GM12878 (cell line): ENCODE measurements at regions of chr11 and their contacts with region 1.

Region 1: GRCh38 chr11:102476812-102477211 is 24.2 kb upstream of the TMEM123 start:
- DNase-seq: no peak
- ATAC-seq: peak; percentile 29
- H3K4me3 ChIP-seq: no peak overlapping the region
- H3K27ac ChIP-seq: no peak overlapping the region
- H3K4me1 ChIP-seq: peaks cover 22% of the 10 kb centered on the region
- H3K27me3 ChIP-seq: no peaks in the 10 kb centered on the region
- CTCF ChIP-seq: no peak
- EP300 ChIP-seq: no peak
- POLR2A ChIP-seq: no peak
- RAD21 ChIP-seq: no peak

Region 2: GRCh38 chr11:102451681-102452460 is 24.9 kb before region 1 on chr11:
- CTCF ChIA-PET with region 1: interaction called, 9 read pairs
- POLR2A ChIA-PET with region 1: interaction called, 6 read pairs
- RAD21 ChIA-PET with region 1: interaction called, 10 read pairs
- SMC1A ChIA-PET with region 1: interaction called, 18 read pairs
- in situ Hi-C with region 1: no loop called
- intact Hi-C with region 1: loop called (anchors 1 kb)
- DNase-seq: no peak
- ATAC-seq: peak; percentile 75
- H3K4me3 ChIP-seq: peak overlapping the region; percentile 75
- H3K27ac ChIP-seq: peak overlapping the region; percentile 79
- H3K4me1 ChIP-seq: peaks cover 17% of the 10 kb centered on the region; the same call in 1 of the 2 replicates
- H3K27me3 ChIP-seq: no peaks in the 10 kb centered on the region
- CTCF ChIP-seq: peak; percentile 27 to 44 (median 35); a peak in 3 of 6 replicates
- EP300 ChIP-seq: no peak
- POLR2A ChIP-seq: peak; percentile 84
- RAD21 ChIP-seq: peak; percentile 20; the same call in 1 of the 2 replicates

Region 3: DNA sequence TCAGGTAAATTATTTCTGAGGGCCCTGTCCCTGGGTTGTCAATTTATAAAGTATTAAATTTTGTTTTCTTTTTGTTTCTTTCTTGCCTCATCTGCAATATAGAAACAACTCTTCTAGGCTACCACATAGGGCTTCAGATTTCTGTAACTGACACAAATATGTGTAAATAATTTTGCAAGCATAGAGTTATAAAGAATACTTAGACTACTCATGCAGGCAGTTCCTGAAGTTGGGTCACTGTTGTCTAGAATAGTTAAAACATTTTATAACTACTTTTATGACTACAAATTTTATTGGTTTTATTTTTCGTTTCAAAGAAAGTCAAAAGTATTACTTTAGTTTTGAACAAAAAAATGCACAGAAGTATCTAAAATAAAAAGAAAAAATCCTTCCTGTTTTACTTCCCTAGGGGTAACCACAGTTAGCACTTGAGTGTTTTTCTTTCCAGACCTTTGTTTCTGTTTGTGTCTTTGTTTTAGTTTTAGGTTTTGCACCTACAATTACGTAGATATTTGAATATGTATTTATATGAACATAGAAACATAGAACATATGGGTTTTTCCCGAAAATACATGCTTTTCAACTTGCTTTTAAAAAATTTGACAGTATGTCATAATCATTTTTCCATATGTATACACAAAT is 11.8 kb before region 1 on chr11:
- CTCF ChIA-PET with region 1: interaction called, 3 read pairs
- POLR2A ChIA-PET with region 1: interaction called, 9 read pairs
- RAD21 ChIA-PET with region 1: interaction called, 4 read pairs
- SMC1A ChIA-PET with region 1: interaction called, 20 read pairs
- in situ Hi-C with region 1: no loop called
- intact Hi-C with region 1: no loop called
- DNase-seq: no peak
- ATAC-seq: peak; percentile 72
- H3K4me3 ChIP-seq: no peak overlapping the region
- H3K27ac ChIP-seq: no peak overlapping the region
- H3K4me1 ChIP-seq: peaks cover 6% of the 10 kb centered on the region; the same call in 1 of the 2 replicates
- H3K27me3 ChIP-seq: no peaks in the 10 kb centered on the region
- CTCF ChIP-seq: no peak
- EP300 ChIP-seq: peak; percentile 25 to 53; a peak in 1 of 4 replicates
- POLR2A ChIP-seq: no peak
- RAD21 ChIP-seq: no peak

Region 4: DNA sequence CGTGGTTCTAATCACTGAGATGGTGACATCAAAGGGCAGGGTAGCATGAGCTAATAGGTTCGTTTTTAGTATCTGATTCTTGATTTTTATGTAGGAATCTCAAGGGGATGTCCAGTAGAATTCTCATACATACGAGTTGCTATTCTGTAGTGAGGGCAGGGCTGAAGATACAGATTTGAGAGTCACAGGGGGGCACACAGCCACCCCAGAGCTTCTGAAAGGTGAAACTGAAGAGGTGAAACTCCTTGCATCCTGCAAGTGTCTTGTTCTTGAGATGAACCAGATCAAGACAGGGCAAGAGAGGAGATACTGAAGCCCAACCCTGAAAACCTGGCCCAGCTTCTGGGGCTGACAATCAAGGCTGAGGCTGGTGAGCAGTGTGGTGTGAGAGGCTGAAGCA is 11.4 kb after region 1 on chr11:
- CTCF ChIA-PET with region 1: interaction called, 34 read pairs
- POLR2A ChIA-PET with region 1: interaction called, 5 read pairs
- RAD21 ChIA-PET with region 1: interaction called, 11 read pairs
- SMC1A ChIA-PET with region 1: interaction called, 16 read pairs
- in situ Hi-C with region 1: no loop called
- intact Hi-C with region 1: loop called (anchors 2 kb)
- DNase-seq: no peak
- ATAC-seq: peak; percentile 86
- H3K4me3 ChIP-seq: no peak overlapping the region
- H3K27ac ChIP-seq: no peak overlapping the region
- H3K4me1 ChIP-seq: peaks cover 18% of the 10 kb centered on the region
- H3K27me3 ChIP-seq: 0 out of 4 replicates have a peak, but pooled peaks cover 0 to 3% of the 10 kb centered on the region in 2 experiments
- CTCF ChIP-seq: no peak
- EP300 ChIP-seq: no peak
- POLR2A ChIP-seq: no peak
- RAD21 ChIP-seq: no peak